Prostate gland (tissue), 2 donors: ENCODE measurements at regions of chr12 and their contacts with region 1.

Region 1: GRCh38 chr12:40107098-40107802 is 1.4 kb upstream of the SLC2A13 start:
- DNase-seq: peak; percentile 90
- H3K4me3 ChIP-seq: peak overlapping the region; percentile 16 to 20
- H3K27ac ChIP-seq: peak overlapping the region; percentile 21 to 33
- H3K4me1 ChIP-seq: no peaks in the 10 kb centered on the region
- H3K27me3 ChIP-seq: no peaks in the 10 kb centered on the region
- CTCF ChIP-seq: peak; percentile 80 to 98 (median 94)
- POLR2A ChIP-seq: no peak

Region 2: DNA sequence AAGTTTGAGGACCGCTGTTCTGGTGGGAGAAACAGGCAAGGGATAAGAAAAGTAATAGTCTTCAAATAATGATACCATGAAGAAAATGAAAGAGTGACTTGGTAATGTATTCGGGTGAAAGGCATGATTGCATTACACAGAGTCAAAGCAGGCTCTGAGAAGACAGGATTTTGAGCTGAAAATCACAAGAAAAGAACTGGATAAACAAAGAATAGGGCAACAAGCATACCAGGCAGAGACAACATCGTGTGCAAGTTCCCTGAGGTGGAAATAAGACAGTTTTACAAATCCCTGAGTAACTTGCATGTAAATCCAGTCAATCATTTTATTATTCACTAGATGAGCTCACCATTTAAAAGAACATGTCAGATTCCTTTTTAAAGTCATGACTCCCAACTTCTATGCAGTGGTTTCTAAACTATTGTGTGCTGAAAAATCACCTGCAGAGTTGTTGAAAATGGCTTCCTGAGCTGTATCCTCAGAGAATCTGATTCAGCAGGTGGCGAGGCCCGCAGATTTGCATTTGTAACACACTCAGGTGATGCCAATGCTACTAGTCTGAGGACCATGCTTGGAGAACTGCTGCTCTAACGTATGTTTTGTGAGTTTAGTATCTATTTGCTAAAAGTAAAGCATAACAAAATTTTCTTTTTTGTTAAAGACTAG is 354.6 kb before region 1 on chr12:
- intact Hi-C with region 1: no loop called
- DNase-seq: no peak
- H3K4me3 ChIP-seq: no peak overlapping the region
- H3K27ac ChIP-seq: no peak overlapping the region
- H3K4me1 ChIP-seq: no peaks in the 10 kb centered on the region
- H3K27me3 ChIP-seq: no peaks in the 10 kb centered on the region
- CTCF ChIP-seq: no peak
- POLR2A ChIP-seq: no peak

Region 3: DNA sequence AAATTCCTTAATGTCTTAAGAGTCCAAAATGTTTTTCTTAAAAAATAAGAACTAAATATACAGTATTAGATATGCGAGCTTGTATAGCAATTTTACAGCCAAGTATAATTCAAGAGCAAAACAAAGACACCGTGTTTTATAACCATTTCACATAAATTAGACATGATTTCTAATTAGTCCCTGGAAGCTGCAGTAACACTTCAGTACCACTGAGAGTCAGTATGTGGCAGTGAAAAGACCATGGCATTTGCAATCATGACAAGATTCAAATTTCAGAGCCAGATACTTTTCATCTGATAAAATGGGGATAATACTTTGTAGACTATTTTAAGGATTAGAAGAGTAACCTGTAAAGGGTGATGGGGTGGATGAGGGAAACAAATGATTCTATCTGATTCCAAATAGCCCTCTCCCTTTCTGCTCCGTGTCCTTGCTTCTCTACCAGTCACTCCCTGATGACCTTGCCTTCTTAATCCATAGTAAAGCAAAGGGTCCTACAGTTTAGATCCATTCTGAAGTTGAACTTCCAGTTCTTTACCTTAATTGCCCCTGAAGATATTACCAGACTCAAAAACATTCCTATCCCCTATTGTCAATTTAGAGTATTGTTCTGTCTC is 342.2 kb before region 1 on chr12:
- intact Hi-C with region 1: loop called (anchors 1 kb)
- DNase-seq: no peak
- H3K4me3 ChIP-seq: no peak overlapping the region
- H3K27ac ChIP-seq: no peak overlapping the region
- H3K4me1 ChIP-seq: no peaks in the 10 kb centered on the region
- H3K27me3 ChIP-seq: no peaks in the 10 kb centered on the region
- CTCF ChIP-seq: peak; percentile 39 to 86 (median 62)
- POLR2A ChIP-seq: no peak

Region 4: DNA sequence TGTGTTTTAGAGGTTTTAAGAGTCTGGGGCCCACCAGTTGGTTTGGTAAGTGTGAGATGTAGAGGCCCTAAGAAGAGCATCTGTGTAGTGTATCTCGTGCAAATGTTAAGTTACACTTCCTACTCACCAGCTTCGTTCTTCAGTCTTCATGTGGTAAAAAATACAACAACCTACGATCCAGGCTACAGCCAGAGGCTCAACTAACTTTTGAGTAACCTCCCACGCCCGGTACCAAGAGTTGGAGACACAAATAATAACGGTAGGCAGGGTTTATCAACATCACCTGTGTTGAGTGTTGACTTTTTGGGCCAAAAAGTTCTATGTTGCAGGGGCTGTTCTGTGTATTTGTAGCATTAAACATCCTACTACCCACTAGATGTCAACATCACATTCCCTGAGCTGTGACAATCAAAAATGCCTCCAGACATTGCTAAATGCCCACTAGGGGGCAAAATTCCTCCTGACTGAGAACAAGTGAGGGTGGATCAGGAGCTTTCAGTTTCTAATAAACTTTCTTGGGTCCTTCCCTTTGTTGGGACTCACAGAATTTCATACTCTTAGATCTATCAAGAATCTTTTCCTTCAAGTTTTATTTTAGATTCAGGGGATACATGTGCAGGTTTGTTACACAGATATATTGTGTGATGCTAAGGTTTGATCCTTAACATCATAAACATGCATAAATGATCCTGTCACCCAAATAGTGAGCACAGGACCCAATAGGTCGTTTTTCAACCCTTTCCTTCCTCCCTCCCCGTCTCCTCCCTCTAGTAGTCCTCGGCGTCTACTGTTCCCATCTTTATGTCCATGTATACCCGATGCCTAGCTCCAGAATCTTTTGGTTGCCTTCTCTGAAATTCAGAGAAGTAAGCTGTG is 96.1 kb before region 1 on chr12:
- intact Hi-C with region 1: loop called (anchors 2 kb)
- DNase-seq: peak; percentile 35
- H3K4me3 ChIP-seq: no peak overlapping the region
- H3K27ac ChIP-seq: no peak overlapping the region
- H3K4me1 ChIP-seq: no peaks in the 10 kb centered on the region
- H3K27me3 ChIP-seq: no peaks in the 10 kb centered on the region
- CTCF ChIP-seq: peak; percentile 30 to 66 (median 56)
- POLR2A ChIP-seq: no peak

Region 5: DNA sequence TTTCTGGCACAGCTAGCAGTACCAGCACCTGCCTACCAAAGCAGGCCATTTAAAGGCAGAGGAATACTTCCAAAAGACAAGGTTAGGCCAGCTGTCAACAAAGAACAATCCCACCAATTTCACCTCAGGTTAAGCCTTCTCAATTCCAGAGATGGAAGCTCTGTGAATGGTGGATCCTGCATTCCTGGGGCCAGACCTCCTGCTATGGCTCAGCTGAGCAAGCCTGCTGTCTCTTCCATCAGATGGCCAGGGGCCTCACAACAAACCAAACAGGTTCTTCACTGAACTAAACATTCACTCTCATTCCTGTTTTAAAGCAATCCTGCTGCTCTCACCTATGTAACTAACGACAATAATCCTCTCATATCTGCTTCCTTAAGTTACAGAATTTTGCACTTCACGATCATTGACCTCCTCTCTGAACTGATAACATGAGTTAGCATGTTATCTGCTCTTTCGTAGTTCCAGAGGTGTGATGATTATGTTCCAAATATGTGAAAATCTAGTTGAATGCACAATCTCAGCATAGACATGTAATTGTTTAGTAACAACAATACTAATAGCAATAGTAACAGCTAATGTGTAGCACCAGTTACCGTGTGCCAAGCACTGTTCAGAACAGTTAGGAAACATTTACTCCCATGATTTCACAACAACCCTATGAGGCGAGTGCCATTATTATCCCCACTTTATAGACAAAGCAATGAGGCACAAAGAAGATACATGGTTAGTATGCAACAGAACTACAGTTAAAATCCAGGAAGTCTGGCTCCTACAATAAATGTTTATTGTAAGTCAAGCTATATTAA is 74.6 kb before region 1 on chr12:
- intact Hi-C with region 1: loop called (anchors 5 kb)
- DNase-seq: no peak
- H3K4me3 ChIP-seq: no peak overlapping the region
- H3K27ac ChIP-seq: no peak overlapping the region
- H3K4me1 ChIP-seq: no peaks in the 10 kb centered on the region
- H3K27me3 ChIP-seq: no peaks in the 10 kb centered on the region
- CTCF ChIP-seq: no peak
- POLR2A ChIP-seq: no peak

Region 6: GRCh38 chr12:40224439-40225291 is 117.4 kb after region 1 on chr12 and contains the start of gene LRRK2:
- intact Hi-C with region 1: loop called (anchors 5 kb)
- DNase-seq: peak; percentile 68
- H3K4me3 ChIP-seq: peak within 1 kb of the TSS; percentile 50 to 69
- H3K27ac ChIP-seq: peak within 1 kb of the TSS; percentile 85 to 89
- H3K4me1 ChIP-seq: no peaks in the 10 kb centered on the region
- H3K27me3 ChIP-seq: no peaks in the 10 kb centered on the region
- CTCF ChIP-seq: peak in 1 of 4 experiments; percentile 15
- POLR2A ChIP-seq: no peak
- total RNA-seq, gene LRRK2: 6.2 to 6.8 TPM